Dendritic cell treated with granulocyte-macrophage colony-stimulating factor and Interleukin-4, amounts not matched to agents 40 ng/mL and 50 ng/mL, for 4 days (primary cell): ENCODE measurements at regions of chr3 and their contacts with region 1.

Region 1: GRCh38 chr3:94069194-94069813 is 6.4 kb downstream of the NSUN3 start:
- H3K4me3 Mint-ChIP-seq: no peak overlapping the region
- H3K27ac Mint-ChIP-seq: no peak overlapping the region
- H3K4me1 Mint-ChIP-seq: peaks cover 55% of the 10 kb centered on the region
- H3K27me3 Mint-ChIP-seq: no peaks in the 10 kb centered on the region

Region 2: DNA sequence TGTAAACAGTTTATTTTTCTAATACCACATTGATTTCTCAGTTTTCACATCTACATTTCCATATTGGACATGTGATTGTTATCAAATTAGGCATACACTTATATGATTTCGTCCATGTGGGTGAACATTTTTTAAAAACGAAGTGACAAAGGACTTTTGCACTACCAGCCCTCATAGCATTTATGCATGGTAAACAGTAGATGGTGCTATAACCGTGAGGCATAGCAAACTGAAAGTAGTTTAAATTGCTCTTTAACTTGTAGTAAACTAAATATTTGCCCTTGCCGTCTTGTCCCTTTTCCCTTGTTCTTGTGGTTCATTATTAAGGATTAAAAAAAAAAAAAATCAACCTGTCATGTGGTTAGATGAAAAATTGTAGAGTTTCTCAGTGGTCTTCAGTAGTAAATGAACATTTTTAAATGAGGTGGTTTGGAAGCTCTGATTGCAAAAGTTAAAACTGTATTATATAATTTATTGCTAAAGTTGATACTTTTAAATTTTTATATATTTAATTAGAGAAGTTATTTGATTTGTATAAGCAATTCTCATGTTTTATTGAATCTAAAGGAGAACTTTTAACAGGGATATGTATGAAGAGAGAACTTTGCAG is 64.9 kb before region 1 on chr3:
- intact Hi-C with region 1: loop called (anchors 1 kb)
- H3K4me3 Mint-ChIP-seq: peak overlapping the region; percentile 59
- H3K27ac Mint-ChIP-seq: peak overlapping the region; percentile 63
- H3K4me1 Mint-ChIP-seq: peaks cover 5% of the 10 kb centered on the region
- H3K27me3 Mint-ChIP-seq: no peaks in the 10 kb centered on the region

Region 3: DNA sequence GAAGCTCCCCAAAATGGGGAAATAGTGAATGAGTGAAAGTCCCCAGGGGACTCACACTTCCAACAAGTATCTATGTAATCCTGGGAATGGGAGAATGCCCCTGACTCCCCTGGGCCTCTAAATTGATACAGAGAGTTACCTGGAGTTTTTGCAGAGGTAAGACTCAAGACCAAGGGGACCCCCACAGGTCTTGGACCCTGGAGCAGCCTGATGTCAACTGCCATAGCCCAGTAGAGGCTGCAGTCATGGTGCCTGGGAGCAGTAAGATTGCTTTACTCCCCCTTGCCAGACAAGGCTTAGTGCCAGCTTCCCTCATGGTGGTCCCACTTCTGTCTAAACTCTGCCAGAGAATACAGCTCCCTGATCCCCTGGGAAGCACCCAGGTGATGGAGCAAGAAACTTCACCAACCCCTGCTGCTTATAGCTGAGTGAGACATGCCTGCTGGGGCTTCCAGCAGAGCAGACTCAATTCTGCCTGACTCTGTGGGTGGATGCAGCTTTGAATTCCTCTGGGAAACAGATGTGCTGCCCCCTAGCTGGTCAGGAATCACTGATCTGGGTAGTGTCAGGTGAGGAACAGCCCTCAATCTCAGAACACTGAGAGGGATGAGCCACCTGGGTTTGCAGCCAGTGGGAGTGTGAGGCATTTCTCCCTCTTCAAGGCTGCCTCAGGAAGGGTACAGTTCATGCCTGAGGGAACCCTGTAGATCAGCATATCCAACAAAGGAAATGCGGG is 479.4 kb after region 1 on chr3:
- intact Hi-C with region 1: no loop called
- H3K4me3 Mint-ChIP-seq: no peak overlapping the region
- H3K27ac Mint-ChIP-seq: no peak overlapping the region
- H3K4me1 Mint-ChIP-seq: no peaks in the 10 kb centered on the region
- H3K27me3 Mint-ChIP-seq: no peaks in the 10 kb centered on the region